Activated CD8-positive, alpha-beta T cell treated with anti-CD3 and anti-CD28 coated beads for 36 hours (primary cell): ENCODE measurements at regions of chr6 and their contacts with region 1.

Region 1: GRCh38 chr6:3258720-3259490 is at the start of gene PSMG4:
- DNase-seq: peak; percentile 93
- ATAC-seq: peak; percentile 91
- H3K4me3 Mint-ChIP-seq: peak within 1 kb of the TSS; percentile 100
- H3K27ac Mint-ChIP-seq: peak within 1 kb of the TSS; percentile 94
- H3K4me1 Mint-ChIP-seq: peaks cover 34% of the 10 kb centered on the region
- H3K27me3 Mint-ChIP-seq: peaks cover 4% of the 10 kb centered on the region
- CTCF ChIP-seq: no peak
- total RNA-seq, gene PSMG4: 50.2 to 53.9 TPM

Region 2: DNA sequence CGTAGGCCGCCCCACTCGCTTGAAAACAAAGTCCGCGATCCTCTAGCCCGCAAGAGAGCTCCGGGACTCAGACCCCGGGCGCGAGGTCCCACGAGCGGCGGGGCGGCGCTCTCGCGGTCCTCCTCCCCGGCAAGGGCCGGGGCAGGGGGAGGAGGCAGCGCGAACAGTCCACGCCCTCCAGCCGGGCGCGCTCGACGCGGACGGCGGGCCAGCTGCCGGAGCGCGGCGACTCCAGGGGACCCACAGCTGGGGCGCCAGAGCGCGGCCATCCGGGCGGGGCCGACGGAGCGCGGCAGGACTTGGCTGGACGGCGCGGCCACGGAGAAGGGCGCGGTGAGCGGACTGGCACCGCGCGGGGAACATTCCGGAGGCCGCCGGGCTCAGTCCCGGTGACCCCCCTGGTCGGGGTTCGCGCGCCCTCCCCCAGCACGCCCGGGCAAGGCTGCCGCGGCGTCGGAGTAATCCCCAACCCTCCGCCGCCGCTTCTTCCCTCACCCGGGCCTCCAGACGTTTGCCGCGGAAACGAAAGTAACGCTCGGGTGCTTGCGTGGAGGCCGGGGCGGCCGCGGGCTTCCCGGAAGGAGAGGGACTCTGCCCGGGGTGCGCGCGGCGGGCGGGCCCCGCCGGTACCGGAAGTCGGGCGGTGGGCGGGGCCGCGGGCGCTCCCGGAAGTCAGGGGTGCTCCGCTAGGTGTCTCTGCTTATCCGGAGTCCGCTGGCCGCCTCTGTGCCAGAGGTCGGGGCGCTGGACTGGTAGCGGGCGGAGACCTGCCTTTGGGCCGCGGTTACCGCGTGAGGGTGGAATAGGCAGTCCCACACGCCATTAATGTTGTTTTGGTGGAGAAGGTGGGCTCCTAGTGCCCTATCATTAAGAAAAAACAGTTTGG is 190.3 kb before region 1 on chr6 and contains the start of gene RIPK1:
- CTCF ChIA-PET with region 1: no interaction called
- POLR2A ChIA-PET with region 1: no interaction called
- intact Hi-C with region 1: loop called (anchors 5 kb)
- DNase-seq: peak; percentile 95
- ATAC-seq: peak; percentile 84
- H3K4me3 Mint-ChIP-seq: peak within 1 kb of the TSS; percentile 96
- H3K27ac Mint-ChIP-seq: peak within 1 kb of the TSS; percentile 98
- H3K4me1 Mint-ChIP-seq: peaks cover 39% of the 10 kb centered on the region
- H3K27me3 Mint-ChIP-seq: no peaks in the 10 kb centered on the region
- CTCF ChIP-seq: no peak
- total RNA-seq, gene RIPK1: 8.8 to 9.0 TPM